ENCODE measurements at regions of chr1 and their contacts with region 1.

Region 1: DNA sequence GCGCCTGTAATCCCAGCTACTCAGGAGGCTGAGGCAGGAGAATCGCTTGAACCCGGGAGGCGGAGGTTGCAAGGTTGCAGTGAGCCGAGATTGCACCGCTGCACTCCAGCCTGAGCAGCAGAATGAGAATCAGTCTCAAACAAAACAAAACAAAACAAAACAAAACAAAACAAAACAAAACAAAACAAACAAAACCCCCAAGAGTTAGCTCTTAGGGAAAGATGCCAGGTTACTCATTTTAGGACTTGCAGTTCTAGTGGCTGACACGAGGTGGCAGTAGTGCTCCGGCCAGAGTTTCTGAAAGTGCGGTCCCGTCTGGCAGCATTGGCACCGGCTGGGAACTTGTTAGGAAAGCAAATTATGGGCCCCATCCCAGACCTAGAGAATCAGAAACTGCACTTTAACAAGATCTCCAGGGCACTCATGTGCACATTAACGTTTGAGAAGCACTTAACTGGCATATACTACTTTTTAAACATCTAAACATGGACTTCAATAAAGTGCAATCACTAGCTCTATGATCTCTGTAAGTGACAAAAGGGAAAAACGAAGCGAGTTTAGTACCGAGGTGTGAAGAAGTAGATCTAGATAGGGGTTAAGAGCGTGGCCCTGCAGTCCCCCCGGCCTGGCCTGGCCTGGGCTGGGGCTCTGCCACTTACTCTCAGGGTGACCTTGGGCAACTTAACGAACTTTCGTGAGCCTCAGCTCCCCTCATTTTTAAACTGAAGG is 41.9 kb upstream of the TNFRSF1B start:
- DNase-seq: no peak
- ATAC-seq: peak; percentile 67
- H3K4me3 ChIP-seq: no peak overlapping the region
- H3K27ac ChIP-seq: no peak overlapping the region
- H3K4me1 ChIP-seq: no peaks in the 10 kb centered on the region
- H3K27me3 ChIP-seq: no peaks in the 10 kb centered on the region
- CTCF ChIP-seq: peak; percentile 89 to 95 (median 89)
- EP300 ChIP-seq: no peak
- POLR2A ChIP-seq: no peak
- RAD21 ChIP-seq: peak; percentile 94

Region 2: DNA sequence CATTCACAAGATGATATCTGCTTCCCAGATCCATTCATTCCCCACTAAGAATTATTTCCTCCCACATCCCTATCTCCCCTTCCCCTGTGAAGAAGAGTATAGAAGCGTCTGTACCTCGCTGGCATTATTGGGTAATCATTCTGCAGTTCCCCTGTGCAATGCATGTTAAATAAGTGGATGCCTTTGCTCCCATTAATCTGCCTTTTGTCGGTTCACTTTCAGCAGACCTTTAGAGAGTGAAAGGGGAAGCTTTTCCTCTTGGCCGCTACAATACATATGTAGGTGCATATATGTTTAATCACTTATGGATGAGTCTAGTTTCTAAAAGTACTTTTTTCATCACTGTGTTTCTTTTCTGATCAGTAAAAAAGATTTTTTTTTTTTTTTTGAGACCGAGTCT is 311.8 kb before region 1 on chr1:
- CTCF ChIA-PET with region 1: no interaction called
- POLR2A ChIA-PET with region 1: no interaction called
- RAD21 ChIA-PET with region 1: no interaction called
- SMC1A ChIA-PET with region 1: no interaction called
- in situ Hi-C with region 1: no loop called
- intact Hi-C with region 1: no loop called
- DNase-seq: no peak
- ATAC-seq: no peak
- H3K4me3 ChIP-seq: no peak overlapping the region
- H3K27ac ChIP-seq: no peak overlapping the region
- H3K4me1 ChIP-seq: peaks cover 18% of the 10 kb centered on the region
- H3K27me3 ChIP-seq: no peaks in the 10 kb centered on the region
- CTCF ChIP-seq: no peak
- EP300 ChIP-seq: no peak
- POLR2A ChIP-seq: no peak
- RAD21 ChIP-seq: no peak

Region 3: DNA sequence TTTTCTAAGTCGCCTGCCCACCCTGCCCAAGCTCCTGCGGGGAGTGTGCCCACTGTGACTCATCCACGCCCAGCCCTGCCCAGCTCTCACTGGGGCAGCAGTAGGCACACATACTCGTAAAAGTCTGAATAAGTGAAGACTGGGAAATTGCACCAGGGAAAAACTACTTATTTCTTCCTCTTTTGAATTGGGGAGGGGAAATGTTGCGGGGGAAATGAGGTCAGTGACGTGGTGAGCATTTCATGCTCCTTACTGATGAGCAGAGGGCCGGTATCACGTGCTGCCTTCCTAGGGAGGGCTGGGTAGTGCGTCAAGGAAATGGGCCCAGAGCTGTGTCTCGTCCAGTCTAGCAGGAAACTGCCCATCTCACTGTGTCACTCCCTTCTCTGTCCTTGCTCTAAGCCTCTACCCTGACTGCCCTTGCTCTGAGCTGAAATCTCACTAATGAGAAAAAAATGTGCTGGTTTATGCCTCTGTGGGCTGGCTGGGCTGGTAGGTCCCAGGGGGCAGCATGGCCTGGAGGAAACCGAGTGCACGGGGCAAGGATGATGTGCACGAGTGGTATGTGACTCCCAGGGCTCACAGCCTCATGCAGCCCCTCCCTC is 28.4 kb after region 1 on chr1:
- CTCF ChIA-PET with region 1: interaction called, 24 read pairs
- POLR2A ChIA-PET with region 1: interaction called, 5 read pairs
- RAD21 ChIA-PET with region 1: interaction called, 42 read pairs
- SMC1A ChIA-PET with region 1: interaction called, 50 read pairs
- in situ Hi-C with region 1: no loop called
- intact Hi-C with region 1: no loop called
- DNase-seq: peak; percentile 78
- ATAC-seq: peak; percentile 68
- H3K4me3 ChIP-seq: no peak overlapping the region
- H3K27ac ChIP-seq: peak overlapping the region; percentile 84
- H3K4me1 ChIP-seq: peaks cover 76% of the 10 kb centered on the region
- H3K27me3 ChIP-seq: no peaks in the 10 kb centered on the region
- CTCF ChIP-seq: no peak
- EP300 ChIP-seq: 0 out of 4 replicates have a peak, but pooled peaks of 1 of the 2 experiments have one; percentile 6
- POLR2A ChIP-seq: 0 out of 2 replicates have a peak, but pooled peaks have one; percentile 40
- RAD21 ChIP-seq: no peak

Region 4: DNA sequence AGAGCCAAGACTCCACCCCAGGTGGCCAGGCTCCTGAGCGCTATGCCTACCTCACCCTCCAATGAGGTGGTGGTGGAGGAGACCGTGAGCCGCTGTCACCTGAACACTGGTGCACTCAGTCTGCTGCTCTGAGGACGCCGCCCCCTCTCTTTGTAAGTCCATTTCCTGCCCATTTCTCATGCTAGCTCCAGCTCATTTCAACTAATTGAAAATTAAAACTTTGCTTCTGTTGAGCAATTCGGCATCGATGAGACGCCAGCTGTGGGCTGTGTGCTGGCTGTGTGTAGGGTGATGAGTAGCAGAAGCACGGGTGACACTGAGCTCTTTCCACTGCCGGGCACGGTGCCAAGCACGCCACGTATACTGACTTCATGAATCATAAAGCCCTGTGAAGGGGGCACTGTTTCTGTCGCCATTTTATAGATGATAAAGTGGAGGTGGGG is 53.2 kb after region 1 on chr1:
- CTCF ChIA-PET with region 1: interaction called, 28 read pairs
- POLR2A ChIA-PET with region 1: no interaction called
- RAD21 ChIA-PET with region 1: interaction called, 21 read pairs
- SMC1A ChIA-PET with region 1: interaction called, 18 read pairs
- in situ Hi-C with region 1: no loop called
- intact Hi-C with region 1: no loop called
- DNase-seq: no peak
- ATAC-seq: no peak
- H3K4me3 ChIP-seq: no peak overlapping the region
- H3K27ac ChIP-seq: no peak overlapping the region
- H3K4me1 ChIP-seq: peaks cover 52% of the 10 kb centered on the region
- H3K27me3 ChIP-seq: no peaks in the 10 kb centered on the region
- CTCF ChIP-seq: no peak
- EP300 ChIP-seq: no peak
- POLR2A ChIP-seq: no peak; the same call in 1 of the 2 replicates
- RAD21 ChIP-seq: no peak

Region 5: DNA sequence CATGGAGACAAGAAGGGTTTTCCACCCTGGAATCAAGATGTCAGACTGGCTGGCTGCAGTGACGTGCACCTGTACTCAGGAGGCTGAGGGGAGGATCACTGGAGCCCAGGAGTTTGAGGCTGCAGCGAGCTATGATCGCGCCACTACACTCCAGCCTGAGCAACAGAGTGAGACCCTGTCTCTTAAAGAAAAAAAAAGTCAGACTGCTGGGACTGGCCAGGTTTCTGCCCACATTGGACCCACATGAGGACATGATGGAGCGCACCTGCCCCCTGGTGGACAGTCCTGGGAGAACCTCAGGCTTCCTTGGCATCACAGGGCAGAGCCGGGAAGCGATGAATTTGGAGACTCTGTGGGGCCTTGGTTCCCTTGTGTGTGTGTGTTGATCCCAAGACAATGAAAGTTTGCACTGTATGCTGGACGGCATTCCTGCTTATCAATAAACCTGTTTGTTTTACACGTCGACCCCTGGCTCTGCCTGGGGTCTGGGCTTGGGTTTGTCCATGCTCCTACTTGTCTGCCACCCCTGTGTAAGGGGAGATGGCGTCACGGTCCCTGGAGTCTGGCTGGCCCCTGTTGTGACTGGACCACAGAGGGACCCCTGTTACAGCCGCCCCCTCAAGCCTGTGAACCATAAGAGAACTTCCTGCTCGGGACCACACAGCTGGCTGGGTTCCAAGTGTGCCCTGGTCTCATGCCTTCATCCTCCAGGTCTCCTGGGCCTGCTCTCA is 84.1 kb after region 1 on chr1:
- CTCF ChIA-PET with region 1: interaction called, 161 read pairs
- POLR2A ChIA-PET with region 1: interaction called, 3 read pairs
- RAD21 ChIA-PET with region 1: interaction called, 84 read pairs
- SMC1A ChIA-PET with region 1: interaction called, 191 read pairs
- in situ Hi-C with region 1: loop called (anchors 5 kb)
- intact Hi-C with region 1: loop called (anchors 1 kb)
- DNase-seq: no peak
- ATAC-seq: peak; percentile 89
- H3K4me3 ChIP-seq: no peak overlapping the region
- H3K27ac ChIP-seq: no peak overlapping the region
- H3K4me1 ChIP-seq: peaks cover 33% of the 10 kb centered on the region
- H3K27me3 ChIP-seq: no peaks in the 10 kb centered on the region
- CTCF ChIP-seq: peak; percentile 88 to 92 (median 91)
- EP300 ChIP-seq: no peak
- POLR2A ChIP-seq: no peak
- RAD21 ChIP-seq: peak; percentile 98

Region 6: GRCh38 chr1:12244078-12244477 is 119.2 kb after region 1 on chr1:
- CTCF ChIA-PET with region 1: interaction called, 28 read pairs
- POLR2A ChIA-PET with region 1: no interaction called
- RAD21 ChIA-PET with region 1: interaction called, 3 read pairs
- SMC1A ChIA-PET with region 1: interaction called, 17 read pairs
- in situ Hi-C with region 1: no loop called
- intact Hi-C with region 1: no loop called
- DNase-seq: no peak
- ATAC-seq: no peak
- H3K4me3 ChIP-seq: no peak overlapping the region
- H3K27ac ChIP-seq: no peak overlapping the region
- H3K4me1 ChIP-seq: no peaks in the 10 kb centered on the region
- H3K27me3 ChIP-seq: no peaks in the 10 kb centered on the region
- CTCF ChIP-seq: peak; percentile 25 to 41 (median 35); a peak in 5 of 6 replicates
- EP300 ChIP-seq: no peak
- POLR2A ChIP-seq: no peak
- RAD21 ChIP-seq: peak; percentile 31; the same call in 1 of the 2 replicates

Region 7: GRCh38 chr1:12619792-12620487 is 495.1 kb after region 1 on chr1:
- CTCF ChIA-PET with region 1: interaction called, 7 read pairs
- POLR2A ChIA-PET with region 1: no interaction called
- RAD21 ChIA-PET with region 1: interaction called, 6 read pairs
- SMC1A ChIA-PET with region 1: interaction called, 5 read pairs
- in situ Hi-C with region 1: loop called (anchors 5 kb)
- intact Hi-C with region 1: loop called (anchors 10 kb)
- DNase-seq: no peak
- ATAC-seq: peak; percentile 85
- H3K4me3 ChIP-seq: no peak overlapping the region
- H3K27ac ChIP-seq: no peak overlapping the region
- H3K4me1 ChIP-seq: peaks cover 19% of the 10 kb centered on the region
- H3K27me3 ChIP-seq: peaks cover 4 to 13% of the 10 kb centered on the region in 2 experiments; a peak in 3 of 4 replicates
- CTCF ChIP-seq: peak; percentile 97 to 98 (median 97); a peak in 5 of 6 replicates
- EP300 ChIP-seq: no peak
- POLR2A ChIP-seq: no peak
- RAD21 ChIP-seq: peak; percentile 95